ENCODE measurements at regions of chr6 and their contacts with region 1.

Region 1: DNA sequence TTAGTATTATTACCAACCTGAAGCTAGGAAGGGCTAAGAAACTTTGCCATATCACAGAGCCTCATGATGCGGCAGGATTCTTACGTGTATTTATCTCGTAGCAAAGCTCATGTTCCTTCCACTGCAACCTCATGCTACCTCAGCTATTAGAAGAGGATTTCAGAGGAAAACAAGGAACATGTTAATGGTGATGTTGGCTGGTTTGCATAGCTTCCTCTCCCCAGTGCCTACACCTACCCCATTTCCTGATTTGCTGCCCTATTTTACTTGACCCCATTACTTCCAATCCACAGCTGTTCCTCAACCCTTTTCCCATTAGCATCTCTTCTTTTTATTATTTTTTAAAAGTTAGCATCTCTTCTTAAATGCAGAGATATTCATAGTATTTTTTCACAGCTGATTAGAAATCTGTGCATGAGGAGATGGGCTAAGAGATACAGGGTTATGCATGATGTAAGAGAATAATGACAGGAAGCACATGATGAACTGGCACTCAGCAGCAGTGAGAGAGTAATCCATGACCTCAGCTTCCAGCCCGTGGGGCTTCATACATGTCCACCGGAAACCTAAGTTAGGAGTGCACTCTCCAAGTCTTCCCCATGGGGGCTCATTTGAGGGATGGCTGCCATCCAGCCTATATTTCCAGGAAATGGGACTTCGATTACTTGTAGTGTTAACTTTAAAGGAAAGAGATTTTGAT is 106.1 kb upstream of the ASF1A start:
- DNase-seq: no peak
- H3K4me3 ChIP-seq: no peak overlapping the region
- H3K27ac ChIP-seq: no peak overlapping the region
- H3K4me1 ChIP-seq: peaks cover 6% of the 10 kb centered on the region
- H3K27me3 ChIP-seq: no peaks in the 10 kb centered on the region
- CTCF ChIP-seq: no peak
- EP300 ChIP-seq: no peak
- POLR2A ChIP-seq: no peak

Region 2: DNA sequence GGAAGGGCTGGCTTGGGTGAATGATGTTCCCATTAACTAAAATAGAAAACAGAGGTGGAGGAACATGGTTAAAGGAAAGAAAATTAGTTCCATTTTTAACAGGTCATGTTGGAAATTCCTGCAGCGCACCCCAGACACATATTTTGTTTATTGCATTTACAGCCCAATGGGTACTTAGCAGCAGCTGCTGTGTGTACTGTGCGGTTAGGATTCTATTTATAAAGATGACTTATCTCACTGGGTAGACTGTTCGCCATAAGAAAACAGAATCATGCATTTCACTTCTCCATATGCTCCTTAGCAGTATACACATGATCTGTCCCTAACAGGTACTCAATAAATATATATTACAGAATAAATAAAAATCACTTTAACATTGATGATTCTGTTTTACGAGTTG is 745.0 kb before region 1 on chr6:
- intact Hi-C with region 1: loop called in 1 of 4 experiments (anchors 10 kb)
- DNase-seq: no peak
- H3K4me3 ChIP-seq: no peak overlapping the region
- H3K27ac ChIP-seq: no peak overlapping the region
- H3K4me1 ChIP-seq: no peaks in the 10 kb centered on the region
- H3K27me3 ChIP-seq: no peaks in the 10 kb centered on the region
- CTCF ChIP-seq: no peak
- EP300 ChIP-seq: no peak
- POLR2A ChIP-seq: no peak

Region 3: DNA sequence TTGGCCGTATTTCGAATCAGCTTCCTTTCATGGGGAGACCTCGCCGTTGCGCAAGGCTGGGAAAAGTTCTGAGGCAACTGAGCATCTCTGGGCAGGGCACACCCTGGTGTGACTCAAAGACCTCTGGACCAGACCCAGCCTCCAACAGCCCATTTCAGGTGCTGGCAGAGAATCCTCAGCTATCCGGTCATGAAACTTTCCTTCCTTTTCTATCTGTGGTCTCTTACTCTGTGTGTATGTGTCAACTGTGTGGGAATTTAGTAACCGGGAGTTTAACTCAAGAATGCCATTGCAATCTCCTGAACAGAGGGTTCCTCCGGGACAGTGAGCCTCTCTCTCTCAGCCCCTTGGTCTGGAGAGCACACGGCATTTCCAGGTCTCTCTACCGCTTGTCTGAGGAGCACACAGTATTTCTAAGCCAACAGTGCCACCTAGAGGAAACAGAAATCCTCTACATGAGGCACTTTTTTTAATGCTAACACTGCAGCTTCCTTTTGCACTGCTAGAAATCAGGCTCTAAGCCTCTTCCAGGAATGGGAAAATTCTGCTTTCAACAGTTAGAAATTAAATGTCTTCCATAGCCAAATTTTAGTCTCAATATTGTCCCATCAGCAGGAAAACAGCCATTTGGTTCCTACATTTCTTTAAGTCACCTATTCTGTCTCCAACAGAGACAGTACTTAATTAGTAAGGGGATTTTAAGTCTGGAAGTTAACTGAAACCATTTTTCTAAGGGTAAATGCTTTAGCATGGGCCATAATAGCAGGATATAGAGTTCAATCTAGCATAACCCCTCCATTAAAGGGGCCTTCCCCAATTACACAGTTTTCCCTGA is 207.1 kb before region 1 on chr6:
- intact Hi-C with region 1: loop called in 1 of 4 experiments (anchors 10 kb)
- DNase-seq: peak in 1 of 5 donors; percentile 27
- H3K4me3 ChIP-seq: no peak overlapping the region
- H3K27ac ChIP-seq: no peak overlapping the region
- H3K4me1 ChIP-seq: no peaks in the 10 kb centered on the region
- H3K27me3 ChIP-seq: no peaks in the 10 kb centered on the region
- CTCF ChIP-seq: peak; percentile 36 to 47 (median 39)
- EP300 ChIP-seq: no peak
- POLR2A ChIP-seq: no peak

Measured in ovary (tissue), 10 donors.